CD4-positive, alpha-beta memory T cell (primary cell): ENCODE measurements at regions of chr11 and their contacts with region 1.

Region 1: GRCh38 chr11:61041755-61042518 is 60.4 kb upstream of the CD5 start:
- DNase-seq: peak; percentile 89 to 95 (median 93)
- H3K4me3 ChIP-seq: peak overlapping the region in 1 of 2 donors; percentile 54
- H3K4me3 Mint-ChIP-seq: peak overlapping the region; percentile 83 to 94 (median 87)
- H3K27ac ChIP-seq: peak overlapping the region; percentile 85
- H3K27ac Mint-ChIP-seq: peak overlapping the region; percentile 95 to 100 (median 99)
- H3K4me1 ChIP-seq: peaks cover 61% of the 10 kb centered on the region
- H3K4me1 Mint-ChIP-seq: peaks cover 35 to 66% (median 44%) of the 10 kb centered on the region in 4 donors
- H3K27me3 ChIP-seq: no peaks in the 10 kb centered on the region
- H3K27me3 Mint-ChIP-seq: no peaks in the 10 kb centered on the region

Region 2: GRCh38 chr11:60978546-60979380 is 63.2 kb before region 1 on chr11:
- CTCF ChIA-PET with region 1: interaction called, 10 read pairs
- POLR2A ChIA-PET with region 1: interaction called, 116 read pairs
- intact Hi-C with region 1: no loop called
- DNase-seq: peak; percentile 49 to 82 (median 52)
- H3K4me3 ChIP-seq: peak overlapping the region in 1 of 2 donors; percentile 28
- H3K4me3 Mint-ChIP-seq: peak overlapping the region; percentile 81 to 98 (median 86)
- H3K27ac ChIP-seq: peak overlapping the region; percentile 92
- H3K27ac Mint-ChIP-seq: peak overlapping the region; percentile 88 to 100 (median 97)
- H3K4me1 ChIP-seq: peaks cover 91% of the 10 kb centered on the region
- H3K4me1 Mint-ChIP-seq: peaks cover 55 to 98% (median 77%) of the 10 kb centered on the region in 4 donors
- H3K27me3 ChIP-seq: no peaks in the 10 kb centered on the region
- H3K27me3 Mint-ChIP-seq: no peaks in the 10 kb centered on the region

Region 3: GRCh38 chr11:61004180-61004611 is 37.7 kb before region 1 on chr11:
- CTCF ChIA-PET with region 1: interaction called, 3 read pairs
- POLR2A ChIA-PET with region 1: interaction called, 23 read pairs
- intact Hi-C with region 1: no loop called
- DNase-seq: peak in 3 of 5 donors; percentile 47 to 76 (median 60)
- H3K4me3 ChIP-seq: peak overlapping the region; percentile 5 to 14
- H3K4me3 Mint-ChIP-seq: peak overlapping the region; percentile 63 to 87 (median 83)
- H3K27ac ChIP-seq: peak overlapping the region; percentile 54
- H3K27ac Mint-ChIP-seq: peak overlapping the region; percentile 89 to 97 (median 95)
- H3K4me1 ChIP-seq: peaks cover 93% of the 10 kb centered on the region
- H3K4me1 Mint-ChIP-seq: peaks cover 51 to 90% (median 66%) of the 10 kb centered on the region in 4 donors
- H3K27me3 ChIP-seq: no peaks in the 10 kb centered on the region
- H3K27me3 Mint-ChIP-seq: no peaks in the 10 kb centered on the region

Region 4: GRCh38 chr11:61061081-61061826 is 19.3 kb after region 1 on chr11:
- CTCF ChIA-PET with region 1: interaction called, 8 read pairs
- POLR2A ChIA-PET with region 1: interaction called, 1,022 read pairs
- intact Hi-C with region 1: loop called (anchors 1 kb)
- DNase-seq: peak; percentile 60 to 97 (median 65)
- H3K4me3 ChIP-seq: peak overlapping the region; percentile 17 to 48
- H3K4me3 Mint-ChIP-seq: peak overlapping the region; percentile 72 to 93 (median 86)
- H3K27ac ChIP-seq: peak overlapping the region; percentile 69
- H3K27ac Mint-ChIP-seq: peak overlapping the region; percentile 94 to 99 (median 97)
- H3K4me1 ChIP-seq: peaks cover 75% of the 10 kb centered on the region
- H3K4me1 Mint-ChIP-seq: peaks cover 59 to 91% (median 66%) of the 10 kb centered on the region in 4 donors
- H3K27me3 ChIP-seq: no peaks in the 10 kb centered on the region
- H3K27me3 Mint-ChIP-seq: no peaks in the 10 kb centered on the region

Region 5: DNA sequence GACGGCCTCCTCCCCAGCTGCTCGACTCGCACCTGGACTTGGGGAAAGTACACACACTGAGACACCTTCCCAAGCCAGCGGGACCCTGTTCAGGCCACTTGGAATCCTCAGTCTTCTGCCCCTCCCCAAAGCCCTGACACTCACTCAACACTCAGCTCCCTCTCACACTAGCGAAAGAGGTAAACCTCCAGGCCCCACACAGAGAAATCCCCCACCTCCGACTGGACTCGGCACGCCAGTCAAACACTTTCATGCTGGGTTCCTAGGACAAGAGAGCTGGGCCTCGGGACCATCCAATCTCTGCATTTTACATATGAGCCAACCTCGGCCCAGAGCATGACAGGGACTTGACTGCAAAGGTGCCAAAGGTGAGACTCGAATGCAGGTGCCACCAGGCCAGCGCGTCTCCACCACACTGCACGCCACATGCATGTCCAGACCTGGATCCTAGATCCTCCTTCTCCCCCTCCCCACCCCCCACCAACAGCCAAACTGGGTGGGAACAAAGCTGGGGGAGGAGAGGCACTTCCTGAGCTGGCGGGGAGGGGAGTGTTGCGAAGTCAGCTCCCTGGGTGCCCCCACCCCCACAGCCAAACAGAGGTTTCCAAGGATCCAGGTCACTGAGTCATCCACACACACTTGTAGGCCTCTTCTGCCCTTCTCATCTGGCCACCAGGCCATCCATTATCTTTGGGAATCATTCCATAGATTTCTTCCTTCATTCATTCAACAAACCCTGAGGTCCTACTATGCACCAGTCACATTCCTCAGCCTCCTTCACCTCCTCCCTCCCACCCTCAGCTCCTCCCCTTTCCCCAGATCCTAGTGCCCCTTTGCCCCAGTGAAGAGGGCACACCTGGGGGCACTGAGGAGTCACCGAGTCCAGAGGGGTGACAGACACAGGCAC is 49.7 kb after region 1 on chr11:
- CTCF ChIA-PET with region 1: interaction called, 6 read pairs
- POLR2A ChIA-PET with region 1: interaction called, 52 read pairs
- intact Hi-C with region 1: no loop called
- DNase-seq: peak in 1 of 5 donors; percentile 74
- H3K4me3 ChIP-seq: peak overlapping the region in 1 of 2 donors; percentile 16
- H3K4me3 Mint-ChIP-seq: peak overlapping the region; percentile 71 to 89 (median 80)
- H3K27ac ChIP-seq: peak overlapping the region; percentile 87
- H3K27ac Mint-ChIP-seq: peak overlapping the region; percentile 95 to 99 (median 97)
- H3K4me1 ChIP-seq: peaks cover 52% of the 10 kb centered on the region
- H3K4me1 Mint-ChIP-seq: peaks cover 44 to 75% (median 50%) of the 10 kb centered on the region in 4 donors
- H3K27me3 ChIP-seq: no peaks in the 10 kb centered on the region
- H3K27me3 Mint-ChIP-seq: no peaks in the 10 kb centered on the region

Region 6: DNA sequence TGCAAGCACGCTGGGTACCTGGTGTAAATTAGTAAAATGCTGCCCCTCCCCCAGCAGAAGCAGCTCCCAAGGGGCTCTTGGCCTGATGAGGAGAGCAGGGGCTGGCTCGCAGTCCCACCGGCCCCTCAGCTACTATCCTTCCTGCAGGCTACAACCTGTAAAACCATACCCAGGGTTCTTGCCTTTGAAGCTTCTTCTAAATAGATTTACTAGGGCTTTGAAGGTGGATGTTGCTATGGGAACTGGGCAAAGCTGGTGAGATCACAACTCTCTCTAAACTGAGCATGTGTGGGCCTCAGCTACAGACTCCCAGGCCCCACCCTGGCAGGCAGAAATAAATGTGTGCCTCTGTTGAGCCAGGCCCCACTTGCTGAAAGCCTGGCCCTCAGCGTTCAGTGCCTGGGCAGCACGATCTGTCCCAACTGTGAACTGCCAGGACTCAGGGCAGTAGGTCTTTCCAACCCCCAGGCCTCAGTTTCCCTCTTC is 78.8 kb after region 1 on chr11:
- CTCF ChIA-PET with region 1: no interaction called
- POLR2A ChIA-PET with region 1: interaction called, 88 read pairs
- intact Hi-C with region 1: no loop called
- DNase-seq: peak; percentile 74 to 85 (median 78)
- H3K4me3 ChIP-seq: peak overlapping the region in 1 of 2 donors; percentile 10
- H3K4me3 Mint-ChIP-seq: peak overlapping the region; percentile 65 to 83 (median 77)
- H3K27ac ChIP-seq: peak overlapping the region; percentile 70
- H3K27ac Mint-ChIP-seq: peak overlapping the region; percentile 95 to 99 (median 98)
- H3K4me1 ChIP-seq: peaks cover 63% of the 10 kb centered on the region
- H3K4me1 Mint-ChIP-seq: peaks cover 41 to 56% (median 50%) of the 10 kb centered on the region in 4 donors
- H3K27me3 ChIP-seq: no peaks in the 10 kb centered on the region
- H3K27me3 Mint-ChIP-seq: no peaks in the 10 kb centered on the region